Activated CD4-positive, alpha-beta memory T cell treated with anti-CD3 and anti-CD28 coated beads, Interleukin-2, amount 10 ng/mL, durations not matched to agents 7 days and 5 days (primary cell): ENCODE measurements at regions of chr2 and their contacts with region 1.

Region 1: DNA sequence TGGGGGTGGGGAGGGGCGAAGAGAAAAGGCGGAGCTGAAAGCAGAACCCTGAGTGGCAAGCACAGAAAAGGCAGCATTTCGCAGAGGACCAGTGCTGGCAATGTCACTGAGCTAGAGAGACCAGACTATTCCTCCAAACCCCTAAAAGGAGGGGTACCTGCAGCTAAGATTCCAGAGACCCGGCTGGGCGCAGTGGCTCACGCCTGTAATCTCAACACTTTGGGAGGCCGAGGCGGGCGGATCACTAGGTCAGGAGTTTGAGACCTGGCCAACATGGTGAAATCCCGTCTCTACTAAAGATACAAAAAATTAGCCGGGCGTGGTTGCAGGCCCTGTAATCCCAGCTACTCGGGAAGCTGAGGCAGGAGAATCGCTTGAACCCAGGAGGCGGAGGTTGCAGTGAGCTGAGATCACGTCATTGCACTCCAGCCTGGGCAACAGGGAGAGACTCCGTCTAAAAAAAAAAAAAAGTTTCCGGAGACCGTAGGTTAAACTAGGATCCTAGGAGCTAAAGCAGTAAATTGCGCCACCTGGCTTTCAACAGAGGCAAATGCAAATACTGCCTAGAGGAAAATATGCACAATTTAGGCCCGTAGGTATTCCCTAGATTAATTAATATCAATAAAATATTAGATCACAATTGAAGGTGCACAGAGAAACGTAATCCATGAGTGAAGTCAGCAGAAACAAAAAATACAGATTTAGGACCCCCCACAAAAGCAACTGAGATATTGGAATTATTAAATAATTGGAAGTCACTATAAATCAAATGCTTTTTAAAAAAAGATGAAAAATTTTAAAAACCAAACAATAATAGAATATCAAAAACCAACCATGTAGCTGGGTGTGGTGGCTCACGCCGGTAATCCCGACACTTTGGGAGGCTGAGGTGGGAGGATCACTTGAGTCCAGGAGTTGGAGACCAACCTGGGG is 4.9 kb downstream of the UCN start:
- DNase-seq: peak; percentile 51
- H3K4me3 Mint-ChIP-seq: peak overlapping the region; percentile 41
- H3K27ac Mint-ChIP-seq: no peak overlapping the region
- H3K4me1 Mint-ChIP-seq: peaks cover 9% of the 10 kb centered on the region
- H3K27me3 Mint-ChIP-seq: peaks cover 26% of the 10 kb centered on the region

Region 2: GRCh38 chr2:27095745-27096651 is 207.4 kb before region 1 on chr2:
- CTCF ChIA-PET with region 1: interaction called, 46 read pairs
- POLR2A ChIA-PET with region 1: no interaction called
- DNase-seq: peak; percentile 60
- H3K4me3 Mint-ChIP-seq: no peak overlapping the region
- H3K27ac Mint-ChIP-seq: no peak overlapping the region
- H3K4me1 Mint-ChIP-seq: peaks cover 12% of the 10 kb centered on the region
- H3K27me3 Mint-ChIP-seq: no peaks in the 10 kb centered on the region

Region 3: DNA sequence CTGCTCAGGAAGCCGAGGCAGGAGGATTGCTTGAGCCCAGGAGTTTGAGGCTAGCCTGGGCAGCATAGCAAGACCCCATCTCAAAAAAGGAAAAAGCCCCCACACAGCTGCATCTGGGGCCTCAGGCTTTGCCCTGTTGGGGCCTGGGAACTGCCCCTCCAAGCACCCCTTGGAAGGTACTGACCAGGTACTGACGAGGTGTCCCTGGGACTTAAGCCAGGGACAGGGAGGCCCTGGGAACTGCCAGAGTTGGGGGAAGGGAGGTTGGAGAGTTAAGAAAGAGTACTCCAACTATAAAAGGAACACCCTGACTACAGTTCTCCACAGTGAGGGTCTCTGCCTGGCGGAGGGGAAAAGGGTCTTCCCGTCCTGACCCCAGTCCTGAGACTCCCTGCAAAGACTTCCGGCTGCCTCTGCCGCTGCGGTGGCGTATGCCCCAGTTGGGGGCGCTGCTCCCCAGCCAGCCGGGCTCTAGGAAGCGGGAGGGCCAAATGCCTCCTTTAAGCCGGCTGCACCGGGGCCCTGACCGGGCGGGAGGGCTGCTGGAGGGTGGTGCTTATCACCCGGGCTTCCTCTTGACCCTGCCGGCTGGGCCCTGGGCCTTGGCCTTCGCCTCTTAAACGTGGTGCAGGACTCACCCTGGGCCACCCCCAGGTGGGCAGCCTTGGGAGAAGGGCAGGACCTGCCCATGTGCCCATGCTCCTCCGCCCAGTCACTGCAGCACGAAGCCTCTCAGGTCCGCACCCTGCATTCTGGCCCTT is 53.3 kb before region 1 on chr2:
- CTCF ChIA-PET with region 1: interaction called, 11 read pairs
- POLR2A ChIA-PET with region 1: no interaction called
- DNase-seq: peak; percentile 64
- H3K4me3 Mint-ChIP-seq: no peak overlapping the region
- H3K27ac Mint-ChIP-seq: no peak overlapping the region
- H3K4me1 Mint-ChIP-seq: no peaks in the 10 kb centered on the region
- H3K27me3 Mint-ChIP-seq: peaks cover 9% of the 10 kb centered on the region

Region 4: GRCh38 chr2:27281855-27282559 is 21.4 kb before region 1 on chr2 and contains the start of gene TRIM54:
- CTCF ChIA-PET with region 1: interaction called, 31 read pairs
- POLR2A ChIA-PET with region 1: no interaction called
- DNase-seq: no peak
- H3K4me3 Mint-ChIP-seq: no peak within 1 kb of the TSS
- H3K27ac Mint-ChIP-seq: no peak within 1 kb of the TSS
- H3K4me1 Mint-ChIP-seq: peaks cover 13% of the 10 kb centered on the region
- H3K27me3 Mint-ChIP-seq: peaks cover 54% of the 10 kb centered on the region
- total RNA-seq, gene TRIM54: 0.13 TPM in 1 of 2 experiments, not detected in the other

Region 5: DNA sequence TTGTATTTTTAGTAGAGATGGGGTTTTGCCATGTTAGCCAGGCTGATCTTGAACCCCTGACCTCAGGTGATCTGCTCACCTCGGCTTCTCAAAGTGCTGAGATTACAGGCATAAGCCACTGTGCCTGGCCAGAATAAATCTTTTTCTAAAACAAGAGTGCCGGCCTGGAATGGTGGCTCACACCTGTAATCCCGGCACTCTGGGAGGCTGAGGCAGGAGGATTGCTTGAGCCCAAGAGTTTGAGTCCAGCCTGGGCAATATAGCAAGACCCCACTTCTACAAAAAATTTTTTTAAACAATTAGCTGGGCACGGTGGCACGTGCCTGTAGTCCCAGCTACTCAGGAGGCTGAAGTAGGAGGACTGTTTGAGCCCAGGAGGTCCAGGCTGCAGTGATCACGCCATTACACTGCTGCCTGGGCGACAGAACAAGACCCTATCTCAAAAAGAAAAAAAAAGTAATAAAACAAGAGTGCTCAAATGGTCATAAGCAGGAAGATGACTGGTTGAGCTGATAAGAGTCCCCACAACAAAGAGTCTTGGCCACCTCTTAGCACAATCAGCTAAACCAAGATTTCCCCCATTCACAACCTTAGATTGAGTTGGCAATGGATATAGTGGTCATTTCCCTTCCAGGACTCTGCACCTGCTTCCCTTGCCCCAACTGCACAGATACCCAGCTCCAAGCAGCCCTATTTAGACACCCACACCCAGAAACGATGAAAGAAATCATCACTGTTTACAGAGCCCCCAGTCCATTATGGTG is 10.7 kb after region 1 on chr2:
- CTCF ChIA-PET with region 1: interaction called, 27 read pairs
- POLR2A ChIA-PET with region 1: interaction called, 4 read pairs
- DNase-seq: no peak
- H3K4me3 Mint-ChIP-seq: no peak overlapping the region
- H3K27ac Mint-ChIP-seq: no peak overlapping the region
- H3K4me1 Mint-ChIP-seq: no peaks in the 10 kb centered on the region
- H3K27me3 Mint-ChIP-seq: no peaks in the 10 kb centered on the region